ENCODE measurements at regions of chr4 and their contacts with region 1.

Region 1: GRCh38 chr4:77203380-77204197 is 46.6 kb downstream of the CCNG2 start:
- DNase-seq: peak; percentile 77
- H3K4me3 ChIP-seq: no peak overlapping the region
- H3K27ac ChIP-seq: no peak overlapping the region
- H3K4me1 ChIP-seq: no peaks in the 10 kb centered on the region
- H3K27me3 ChIP-seq: peaks cover 58 to 63% of the 10 kb centered on the region in 2 experiments
- CTCF ChIP-seq: peak; percentile 70 to 77
- POLR2A ChIP-seq: no peak

Region 2: GRCh38 chr4:76511947-76512346 is 691.6 kb before region 1 on chr4:
- CTCF ChIA-PET with region 1: interaction called, 11 read pairs
- POLR2A ChIA-PET with region 1: no interaction called
- dilution Hi-C with region 1: no loop called
- intact Hi-C with region 1: loop called (anchors 1 kb)
- DNase-seq: no peak
- H3K4me3 ChIP-seq: no peak overlapping the region
- H3K27ac ChIP-seq: no peak overlapping the region
- H3K4me1 ChIP-seq: no peaks in the 10 kb centered on the region
- H3K27me3 ChIP-seq: no peaks in the 10 kb centered on the region
- CTCF ChIP-seq: no peak
- POLR2A ChIP-seq: no peak

Region 3: GRCh38 chr4:76949276-76950051 is 254.1 kb before region 1 on chr4 and contains the start of gene SEPTIN11:
- CTCF ChIA-PET with region 1: interaction called, 8 read pairs
- POLR2A ChIA-PET with region 1: no interaction called
- dilution Hi-C with region 1: no loop called
- intact Hi-C with region 1: loop called (anchors 2 kb)
- DNase-seq: peak; percentile 92
- H3K4me3 ChIP-seq: peak within 1 kb of the TSS; percentile 73 to 95 (median 74)
- H3K27ac ChIP-seq: peak within 1 kb of the TSS; percentile 81
- H3K4me1 ChIP-seq: peaks cover 19% of the 10 kb centered on the region
- H3K27me3 ChIP-seq: no peaks in the 10 kb centered on the region
- CTCF ChIP-seq: peak in 1 of 2 donors; percentile 5
- POLR2A ChIP-seq: peak; percentile 96
- total RNA-seq, gene SEPTIN11: 168 and 202 TPM in 2 replicates

Region 4: GRCh38 chr4:77052352-77052751 is 151.2 kb before region 1 on chr4:
- CTCF ChIA-PET with region 1: interaction called, 171 read pairs
- POLR2A ChIA-PET with region 1: interaction called, 3 read pairs
- dilution Hi-C with region 1: no loop called
- intact Hi-C with region 1: loop called (anchors 1 kb)
- DNase-seq: peak; percentile 58
- H3K4me3 ChIP-seq: no peak overlapping the region
- H3K27ac ChIP-seq: no peak overlapping the region
- H3K4me1 ChIP-seq: peaks cover 3% of the 10 kb centered on the region
- H3K27me3 ChIP-seq: no peaks in the 10 kb centered on the region
- CTCF ChIP-seq: peak; percentile 66 to 70
- POLR2A ChIP-seq: no peak

Region 5: DNA sequence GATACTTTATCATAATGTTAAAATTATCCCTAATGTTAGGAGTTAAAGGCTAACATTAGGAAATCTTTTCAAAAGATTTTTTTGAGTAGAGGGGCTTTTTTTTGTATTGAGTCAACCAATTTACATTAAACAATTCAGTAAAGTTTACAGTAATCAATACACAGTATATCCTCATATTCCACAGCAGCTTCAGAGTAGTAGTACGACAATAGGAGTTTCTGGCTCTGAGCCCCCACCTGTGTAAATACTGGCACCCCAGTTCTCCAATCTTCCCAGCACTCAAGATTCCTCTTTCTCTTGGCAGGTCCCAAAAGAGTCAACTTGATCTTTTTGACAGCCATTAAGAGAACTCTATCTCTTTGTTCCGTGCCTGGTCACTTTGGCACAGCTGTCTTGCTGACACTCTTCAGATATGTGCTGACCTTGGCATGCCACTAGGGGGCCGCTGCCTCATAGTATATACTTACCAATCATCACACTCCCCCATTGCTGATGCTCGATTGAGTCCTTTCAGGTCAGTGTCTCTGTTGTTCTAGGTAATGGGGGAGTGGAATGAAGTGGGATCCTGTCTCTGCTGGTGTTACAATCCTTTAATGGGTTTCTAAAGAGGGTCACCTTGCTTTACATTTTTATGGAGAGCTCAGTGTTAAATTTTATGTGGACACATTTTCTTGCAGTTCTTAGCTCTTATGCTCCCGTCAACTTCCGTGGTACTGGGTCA is 108.3 kb before region 1 on chr4:
- CTCF ChIA-PET with region 1: interaction called, 111 read pairs
- POLR2A ChIA-PET with region 1: no interaction called
- dilution Hi-C with region 1: no loop called
- intact Hi-C with region 1: loop called (anchors 1 kb)
- DNase-seq: peak; percentile 68
- H3K4me3 ChIP-seq: no peak overlapping the region
- H3K27ac ChIP-seq: no peak overlapping the region
- H3K4me1 ChIP-seq: peaks cover 24% of the 10 kb centered on the region
- H3K27me3 ChIP-seq: peaks cover 0 to 4% of the 10 kb centered on the region in 2 experiments
- CTCF ChIP-seq: peak; percentile 85 to 92
- POLR2A ChIP-seq: no peak

Region 6: GRCh38 chr4:77156533-77156911 is 47.1 kb before region 1 on chr4:
- CTCF ChIA-PET with region 1: interaction called, 13 read pairs
- POLR2A ChIA-PET with region 1: no interaction called
- dilution Hi-C with region 1: no loop called
- intact Hi-C with region 1: loop called (anchors 2 kb)
- DNase-seq: peak; percentile 99
- H3K4me3 ChIP-seq: peak overlapping the region; percentile 75 to 98 (median 80)
- H3K27ac ChIP-seq: peak overlapping the region; percentile 86
- H3K4me1 ChIP-seq: peaks cover 15% of the 10 kb centered on the region
- H3K27me3 ChIP-seq: peaks cover 19 to 22% of the 10 kb centered on the region in 2 experiments
- CTCF ChIP-seq: no peak
- POLR2A ChIP-seq: peak; percentile 57

Region 7: DNA sequence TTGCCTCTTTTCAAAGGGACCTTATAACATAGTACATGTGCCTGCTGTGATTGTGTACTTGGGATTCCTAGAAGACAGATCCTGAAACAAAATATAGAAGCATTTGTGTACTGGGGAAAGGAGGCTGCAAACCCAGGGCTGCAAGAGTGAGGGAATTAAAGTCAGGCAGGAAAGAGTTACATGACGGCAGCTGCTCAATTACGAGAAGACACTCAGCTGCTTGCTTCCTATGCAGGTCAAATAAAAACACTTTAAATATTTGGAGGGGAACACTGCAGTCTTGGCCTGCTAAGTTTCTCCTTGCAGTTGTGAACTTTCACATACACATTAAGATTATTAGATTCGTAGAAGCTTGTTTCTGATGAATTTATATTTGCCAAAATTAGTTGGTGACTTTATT is 210.2 kb after region 1 on chr4:
- CTCF ChIA-PET with region 1: no interaction called
- POLR2A ChIA-PET with region 1: no interaction called
- dilution Hi-C with region 1: no loop called
- intact Hi-C with region 1: no loop called
- DNase-seq: no peak
- H3K4me3 ChIP-seq: no peak overlapping the region
- H3K27ac ChIP-seq: no peak overlapping the region
- H3K4me1 ChIP-seq: no peaks in the 10 kb centered on the region
- H3K27me3 ChIP-seq: peaks cover 3 to 9% of the 10 kb centered on the region in 2 experiments
- CTCF ChIP-seq: no peak
- POLR2A ChIP-seq: no peak

Measured in endothelial cell of umbilical vein (primary cell).